Psoas muscle (tissue), 8 donors: ENCODE measurements at regions of chr12 and their contacts with region 1.

Region 1: GRCh38 chr12:67732857-67733256 is 84.3 kb downstream of the DYRK2 start:
- DNase-seq: no peak
- ATAC-seq: peak; percentile 92 to 96 (median 94)
- H3K4me3 ChIP-seq: peak overlapping the region; percentile 44
- H3K27ac ChIP-seq: peak overlapping the region; percentile 91
- H3K4me1 ChIP-seq: peaks cover 34% of the 10 kb centered on the region
- H3K27me3 ChIP-seq: no peaks in the 10 kb centered on the region
- CTCF ChIP-seq: no peak

Region 2: GRCh38 chr12:67788118-67788517 is 55.3 kb after region 1 on chr12:
- intact Hi-C with region 1: loop called in 1 of 2 experiments (anchors 5 kb)
- DNase-seq: no peak
- ATAC-seq: peak; percentile 81 to 92 (median 88)
- H3K4me3 ChIP-seq: peak overlapping the region; percentile 19
- H3K27ac ChIP-seq: peak overlapping the region; percentile 79
- H3K4me1 ChIP-seq: peaks cover 58% of the 10 kb centered on the region
- H3K27me3 ChIP-seq: no peaks in the 10 kb centered on the region
- CTCF ChIP-seq: no peak